Activated T-helper 1 cell treated with anti-CD3 and anti-CD28 coated beads, Interleukin-12 subunit alpha, Interleukin-12 subunit beta, Interleukin-2, Interleukin-4 antibody, amounts not matched to agents 30 ng/mL and 10 ng/mL and 1 ng/mL, durations not matched to agents 14 hours and 24 hours and 36 hours (primary cell): ENCODE measurements at regions of chr6 and their contacts with region 1.

Region 1: DNA sequence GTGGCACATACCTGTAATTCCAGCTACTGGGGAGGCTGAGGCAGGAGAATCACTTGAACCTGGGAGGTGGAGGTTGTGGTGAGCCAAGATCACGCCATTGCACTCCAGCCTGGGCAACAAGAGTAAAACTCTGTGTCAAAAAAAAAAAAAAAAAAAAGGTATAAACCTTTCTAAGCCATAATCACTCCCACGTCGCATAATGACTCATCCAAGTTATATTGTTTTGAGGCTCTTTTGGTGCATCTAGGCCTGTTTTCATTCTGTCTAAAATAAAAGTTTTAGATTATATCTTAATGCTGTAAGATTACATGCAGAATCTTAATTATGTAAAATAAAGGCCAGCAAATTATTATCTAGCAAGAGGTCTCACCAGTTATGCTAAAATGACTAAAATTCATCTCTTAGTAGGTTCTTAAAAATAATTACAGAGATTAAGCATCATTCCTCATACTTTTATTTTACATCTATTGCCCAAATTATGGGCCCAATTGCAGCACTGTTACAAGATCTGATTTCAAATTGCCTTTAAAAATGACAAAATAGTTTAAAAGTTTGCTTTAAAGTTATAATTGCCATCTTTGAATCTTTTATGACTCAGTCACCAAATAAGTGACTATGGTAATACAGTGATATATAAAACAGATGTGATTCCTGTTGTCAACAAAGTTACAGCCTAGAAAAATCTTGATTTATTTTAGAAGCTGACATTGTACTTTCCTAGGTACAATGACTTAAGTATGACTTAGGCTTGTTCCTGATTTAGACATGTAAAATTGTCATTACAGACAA is 10.4 kb upstream of the SUMO4 start:
- DNase-seq: no peak
- H3K4me3 Mint-ChIP-seq: no peak overlapping the region
- H3K27ac Mint-ChIP-seq: peak overlapping the region; percentile 45
- H3K4me1 Mint-ChIP-seq: peaks cover 82% of the 10 kb centered on the region
- H3K27me3 Mint-ChIP-seq: no peaks in the 10 kb centered on the region

Region 2: DNA sequence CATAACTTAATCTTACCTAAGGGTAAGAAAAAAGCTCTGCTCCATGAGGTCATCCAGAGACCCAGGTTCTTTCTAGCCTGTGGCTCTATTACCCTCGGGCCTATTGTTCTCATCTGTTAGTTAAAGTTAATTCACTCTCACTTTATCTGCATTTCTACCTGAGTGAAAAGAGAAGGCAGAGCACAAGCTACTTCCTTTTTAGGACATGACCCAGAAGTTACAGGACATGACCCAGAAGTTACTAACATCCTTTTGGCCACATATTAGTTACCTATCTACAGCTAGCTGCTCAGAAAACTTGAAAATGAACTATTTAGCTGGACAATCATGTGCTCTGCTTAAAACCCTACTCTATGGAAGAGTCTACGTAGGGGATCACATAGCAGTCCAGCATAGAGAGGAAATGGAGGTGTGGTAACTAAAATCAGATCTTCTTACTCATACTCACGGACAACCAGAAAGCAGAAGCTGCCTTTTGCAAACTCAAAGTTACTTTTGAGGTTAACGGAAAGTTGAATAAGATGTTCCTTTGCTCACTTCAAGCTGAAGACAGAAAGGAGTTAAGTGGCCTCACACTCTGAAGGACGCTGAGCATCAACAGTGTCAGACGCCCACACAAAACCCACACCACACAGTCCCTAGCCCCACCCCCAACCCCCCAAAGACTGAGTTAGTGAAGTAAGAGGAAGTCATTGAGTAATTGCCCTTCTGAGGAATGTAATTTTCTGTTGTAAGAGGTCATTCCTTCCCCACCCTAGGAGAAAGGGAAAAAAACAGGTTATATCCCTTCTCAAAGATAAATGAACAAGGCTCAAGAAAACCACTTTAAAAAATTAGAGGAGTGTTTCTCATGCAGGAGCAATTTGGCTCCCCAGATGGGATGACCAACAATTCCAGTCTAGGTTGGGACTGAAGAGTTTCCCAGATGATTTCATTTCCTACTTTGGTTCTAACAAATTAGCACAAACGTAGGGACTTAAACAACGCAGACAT is 118.1 kb before region 1 on chr6:
- intact Hi-C with region 1: no loop called
- DNase-seq: no peak
- H3K4me3 Mint-ChIP-seq: peak overlapping the region; percentile 62
- H3K27ac Mint-ChIP-seq: peak overlapping the region; percentile 94
- H3K4me1 Mint-ChIP-seq: peaks cover 56% of the 10 kb centered on the region
- H3K27me3 Mint-ChIP-seq: no peaks in the 10 kb centered on the region

Region 3: DNA sequence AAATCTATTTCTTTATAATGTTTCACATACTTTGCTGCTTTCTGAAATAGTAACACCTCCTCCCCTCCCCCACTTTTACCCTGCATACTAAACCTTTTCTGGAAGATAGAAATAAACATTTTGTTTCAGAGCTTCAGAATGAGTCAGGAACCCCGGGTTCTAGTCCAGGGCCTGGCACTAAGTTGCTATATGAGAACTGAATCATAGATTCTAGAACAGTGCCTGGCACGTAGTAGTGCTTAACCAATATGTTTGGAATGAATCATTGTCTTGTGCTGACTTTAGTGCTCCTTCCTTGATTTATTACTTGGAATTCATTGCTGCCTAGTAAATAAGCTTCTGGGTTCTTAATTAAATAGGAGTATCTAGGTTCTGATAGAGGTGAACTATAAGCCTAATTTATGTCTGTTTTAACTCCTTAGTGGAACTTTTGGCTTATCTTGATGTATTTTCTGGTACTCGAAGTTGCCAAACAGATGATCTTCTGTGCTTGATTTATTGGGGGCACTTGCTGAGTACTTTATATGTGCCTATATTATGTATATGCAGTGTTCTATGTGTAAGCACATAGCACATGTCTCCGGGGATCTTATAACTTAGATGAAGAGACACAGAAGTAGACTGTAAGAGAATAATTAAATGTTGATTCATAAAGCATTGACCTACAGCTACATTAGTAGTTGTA is 53.6 kb before region 1 on chr6:
- intact Hi-C with region 1: loop called (anchors 2 kb)
- DNase-seq: peak; percentile 22
- H3K4me3 Mint-ChIP-seq: peak overlapping the region; percentile 76
- H3K27ac Mint-ChIP-seq: peak overlapping the region; percentile 93
- H3K4me1 Mint-ChIP-seq: peaks cover 94% of the 10 kb centered on the region
- H3K27me3 Mint-ChIP-seq: no peaks in the 10 kb centered on the region

Region 4: DNA sequence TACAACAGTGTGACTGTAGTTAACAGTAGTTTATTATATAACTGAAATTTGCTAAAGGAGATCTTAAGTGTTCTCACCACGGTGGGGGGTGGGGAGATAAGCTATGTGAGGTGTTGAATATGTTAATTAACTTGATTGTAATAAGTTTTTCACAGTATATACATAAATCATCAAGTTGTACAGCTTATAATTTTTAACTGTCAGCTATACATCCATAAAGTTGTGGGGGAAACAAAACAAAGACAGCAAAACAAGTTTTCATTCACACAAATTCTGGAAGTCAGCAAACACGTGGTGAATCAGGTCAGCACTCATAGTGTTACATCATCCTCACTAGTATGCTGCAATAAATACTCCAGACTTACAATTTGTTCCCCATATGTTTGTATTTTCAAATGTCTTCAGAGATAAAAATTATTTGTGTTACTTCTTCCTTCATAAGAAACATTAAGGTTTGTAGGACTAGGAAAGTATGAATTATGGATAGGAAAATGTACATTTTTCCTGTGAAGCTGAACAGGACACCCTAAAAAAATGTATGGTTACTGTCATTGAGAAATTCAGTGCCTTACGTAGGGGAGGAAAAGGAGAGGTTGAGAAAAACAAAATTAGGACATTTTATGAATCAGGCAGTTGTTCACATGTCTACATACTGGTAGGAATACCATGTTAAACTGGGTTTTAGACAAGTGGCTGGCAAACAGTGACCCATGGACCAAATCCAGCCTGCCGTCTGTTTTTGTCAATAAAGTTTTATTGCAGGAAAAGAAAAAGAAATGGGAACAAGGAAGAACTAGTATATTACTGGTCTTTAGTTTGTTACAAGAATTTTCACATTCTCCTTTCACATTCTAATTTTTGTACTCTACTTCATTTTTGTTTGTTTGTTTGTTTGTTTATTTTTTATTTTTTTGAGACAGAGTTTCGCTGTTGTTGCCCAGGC is 16.4 kb after region 1 on chr6:
- intact Hi-C with region 1: loop called (anchors 2 kb)
- DNase-seq: no peak
- H3K4me3 Mint-ChIP-seq: no peak overlapping the region
- H3K27ac Mint-ChIP-seq: peak overlapping the region; percentile 76
- H3K4me1 Mint-ChIP-seq: peaks cover 55% of the 10 kb centered on the region
- H3K27me3 Mint-ChIP-seq: no peaks in the 10 kb centered on the region